Stomach (tissue), 19 donors: ENCODE measurements at regions of chr19 and their contacts with region 1.

Region 1: GRCh38 chr19:45643024-45643926 is 4.1 kb upstream of the EML2 start:
- DNase-seq: peak; percentile 88 to 95
- H3K4me3 ChIP-seq: peak overlapping the region in 3 of 4 donors; percentile 17 to 40 (median 40)
- H3K27ac ChIP-seq: peak overlapping the region in 3 of 5 donors; percentile 68 to 85 (median 85)
- H3K4me1 ChIP-seq: peaks cover 47 to 70% (median 64%) of the 10 kb centered on the region in 4 donors
- H3K27me3 ChIP-seq: peaks cover 3 to 39% (median 4%) of the 10 kb centered on the region in 3 donors
- CTCF ChIP-seq: peak in 6 of 7 experiments; percentile 65 to 99 (median 98)
- EP300 ChIP-seq: no peak
- POLR2A ChIP-seq: no peak

Region 2: DNA sequence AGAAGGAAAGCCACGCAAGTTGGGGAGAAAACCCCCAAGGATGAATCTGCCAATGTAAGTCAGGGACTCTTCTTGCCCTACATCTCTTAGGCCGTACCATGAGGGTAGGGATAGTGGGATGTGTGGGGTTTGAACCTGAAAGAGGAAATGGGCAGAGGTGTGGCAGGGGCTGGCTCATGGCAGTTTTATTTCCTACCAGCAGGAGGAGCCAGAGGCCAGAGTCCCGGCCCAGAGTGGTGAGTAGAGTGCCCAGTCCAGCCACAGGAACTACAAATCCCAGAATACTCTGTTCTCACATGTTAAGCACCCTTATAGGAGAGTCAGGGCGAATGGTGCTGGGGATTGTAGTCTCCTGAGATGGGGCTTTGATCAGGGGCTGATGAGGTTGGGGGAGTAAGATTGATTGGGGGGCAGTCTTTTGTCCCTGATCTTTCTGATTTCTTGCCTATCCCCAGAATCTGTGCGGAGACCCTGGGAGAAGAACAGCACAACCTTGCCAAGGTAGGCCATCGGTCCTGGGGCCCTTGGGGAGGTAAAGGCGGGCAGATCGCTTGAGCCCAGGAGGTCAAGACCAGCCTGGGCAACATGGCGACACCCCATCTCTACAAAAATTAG is 119.5 kb before region 1 on chr19:
- intact Hi-C with region 1: loop called (anchors 10 kb)
- DNase-seq: peak; percentile 80 to 96
- H3K4me3 ChIP-seq: no peak overlapping the region
- H3K27ac ChIP-seq: peak overlapping the region in 2 of 5 donors; percentile 66 to 67
- H3K4me1 ChIP-seq: peaks cover 15 to 93% (median 51%) of the 10 kb centered on the region in 4 donors
- H3K27me3 ChIP-seq: peaks cover 0 to under 1% (median 0%) of the 10 kb centered on the region in 3 donors
- CTCF ChIP-seq: peak in 6 of 7 experiments; percentile 68 to 96 (median 88)
- EP300 ChIP-seq: no peak
- POLR2A ChIP-seq: no peak

Region 3: DNA sequence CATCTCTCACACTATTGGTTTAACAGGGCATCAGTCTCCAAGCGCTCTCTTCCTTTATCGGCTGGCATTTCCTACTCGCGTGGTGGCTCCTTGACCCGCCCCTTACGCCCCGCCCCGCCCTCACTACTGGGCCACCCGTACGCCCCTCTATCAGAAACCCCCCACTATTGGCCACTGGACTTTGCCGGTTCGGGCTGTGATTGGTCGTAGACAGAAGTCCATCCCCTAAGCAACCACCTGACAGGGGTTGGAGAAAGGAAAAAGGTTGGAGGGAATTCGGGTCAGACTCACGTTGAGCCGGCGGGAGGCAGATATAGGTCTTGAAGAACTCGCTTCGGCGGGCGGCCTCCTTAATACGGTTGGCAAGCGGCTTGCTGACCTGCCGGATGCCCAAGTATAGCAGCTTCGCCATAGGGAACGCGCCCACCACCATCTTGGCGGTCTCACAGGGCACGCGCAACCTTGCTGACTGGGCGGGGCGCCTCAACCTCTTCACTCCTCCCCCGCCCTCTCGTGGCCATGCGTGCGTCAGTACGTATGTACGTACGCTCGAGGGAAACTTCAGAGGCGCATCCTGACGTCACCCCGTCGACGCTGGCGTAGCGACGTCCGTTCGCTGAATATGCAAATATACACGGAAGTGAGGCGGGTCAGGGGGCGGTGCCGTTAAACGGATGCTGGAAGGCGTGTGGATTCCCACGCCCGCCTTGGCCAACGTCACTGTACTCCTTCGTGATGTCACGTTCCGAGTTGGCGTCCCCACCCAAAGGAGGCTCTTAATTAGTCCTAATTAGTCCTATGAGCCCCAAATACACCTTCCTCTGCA is 58.7 kb before region 1 on chr19 and contains the start of gene OPA3:
- intact Hi-C with region 1: no loop called
- DNase-seq: peak; percentile 100
- H3K4me3 ChIP-seq: peak within 1 kb of the TSS; percentile 52 to 76 (median 62)
- H3K27ac ChIP-seq: peak within 1 kb of the TSS; percentile 92 to 99 (median 98)
- H3K4me1 ChIP-seq: peaks cover 5 to 19% (median 16%) of the 10 kb centered on the region in 4 donors
- H3K27me3 ChIP-seq: no peaks in the 10 kb centered on the region
- CTCF ChIP-seq: peak in 2 of 7 experiments; percentile 32 to 38
- EP300 ChIP-seq: peak; percentile 85
- POLR2A ChIP-seq: peak in 1 of 4 donors; percentile 31
- total RNA-seq, gene OPA3: under 0.01 to 27.5 (median 3.7) TPM

Region 4: DNA sequence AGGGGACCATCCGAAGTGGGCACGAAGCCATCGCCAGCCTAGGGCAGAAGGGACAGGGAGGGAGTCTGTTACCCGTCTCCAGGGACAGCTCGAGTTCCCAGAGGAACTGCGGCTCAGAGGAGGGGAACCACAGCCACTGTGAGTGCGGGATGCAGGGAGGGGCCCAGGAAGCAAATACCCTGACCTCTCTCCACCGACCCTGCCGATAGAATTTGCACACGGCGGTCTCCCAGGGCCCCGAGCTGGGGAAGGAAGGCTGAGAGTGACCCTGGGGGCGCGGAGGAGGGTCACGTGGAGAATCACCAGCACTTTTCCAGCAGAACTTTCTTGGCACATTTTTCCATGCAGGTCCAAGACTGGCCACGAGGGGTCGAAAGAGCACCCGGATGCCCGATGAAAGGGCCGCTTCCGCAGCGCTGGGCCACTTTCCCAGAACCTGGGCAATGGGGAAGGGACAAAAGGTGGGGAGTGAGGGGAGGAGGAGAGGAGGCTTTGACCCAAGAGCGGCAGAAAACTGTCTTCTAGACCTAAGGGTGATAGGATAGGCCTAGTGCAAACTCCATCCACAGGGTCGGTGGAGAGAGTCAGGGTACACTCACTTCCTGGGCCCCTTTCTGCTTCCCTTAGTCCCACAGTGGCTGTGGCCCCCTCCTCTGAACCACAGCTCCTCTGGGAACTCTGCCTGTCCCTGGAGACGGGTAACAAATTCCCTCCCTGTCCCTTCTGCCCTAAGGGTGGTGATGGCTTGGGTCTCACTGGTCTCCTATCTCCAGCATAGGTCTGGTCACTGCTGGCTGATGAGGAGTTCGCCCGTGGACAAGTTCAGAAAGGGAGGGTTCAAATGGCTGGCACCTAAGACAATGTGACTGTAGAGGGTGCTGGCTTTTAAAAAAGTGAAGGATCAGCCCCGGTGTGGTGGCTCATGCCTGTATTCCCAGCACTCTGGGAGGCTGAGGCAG is 35.9 kb before region 1 on chr19:
- intact Hi-C with region 1: loop called (anchors 5 kb)
- DNase-seq: peak; percentile 80 to 88
- H3K4me3 ChIP-seq: peak overlapping the region in 3 of 4 donors; percentile 14 to 27 (median 21)
- H3K27ac ChIP-seq: peak overlapping the region in 4 of 5 donors; percentile 22 to 57 (median 45)
- H3K4me1 ChIP-seq: peaks cover 0 to 14% (median 5%) of the 10 kb centered on the region in 4 donors
- H3K27me3 ChIP-seq: peaks cover 0 to 19% (median 9%) of the 10 kb centered on the region in 3 donors
- CTCF ChIP-seq: peak in 6 of 7 experiments; percentile 58 to 96 (median 81)
- EP300 ChIP-seq: no peak
- POLR2A ChIP-seq: no peak